ENCODE measurements at regions of chr2 and their contacts with region 1.

Region 1: DNA sequence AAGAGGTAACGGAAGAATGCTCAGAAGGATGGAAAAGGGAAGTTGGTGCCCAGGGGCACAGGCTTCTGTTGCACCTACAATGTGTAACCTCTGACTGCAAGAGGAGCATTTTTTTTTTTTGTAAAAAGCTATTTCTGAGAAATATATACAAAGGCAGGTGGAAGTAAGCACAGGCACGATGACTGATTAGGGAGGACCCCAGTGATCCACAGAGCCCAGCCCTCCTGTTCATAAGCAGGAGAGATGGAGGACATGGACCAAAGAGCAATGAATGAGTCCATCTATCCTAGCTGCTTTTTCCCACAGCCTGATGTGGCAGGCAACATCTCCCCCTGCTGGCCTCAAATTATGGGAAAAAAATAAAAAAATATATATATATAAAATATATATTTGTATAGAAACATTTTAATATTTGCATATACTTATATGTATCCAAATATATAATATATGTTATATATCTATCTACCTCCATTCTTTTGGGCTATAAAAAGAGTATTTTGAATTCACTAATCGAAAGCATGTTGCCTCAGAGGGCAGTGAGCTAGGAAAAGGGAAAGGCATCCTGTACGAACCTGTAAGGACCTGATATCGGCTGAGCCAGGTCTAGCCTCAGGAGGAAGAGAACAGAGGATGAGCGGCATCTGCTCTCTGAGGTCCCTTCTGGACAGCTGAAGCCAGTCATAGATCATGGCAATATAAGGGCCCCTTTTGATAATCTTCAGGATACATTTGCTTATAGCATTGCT is 166.0 kb upstream of the STK17B start:
- DNase-seq: peak; percentile 56
- H3K4me3 ChIP-seq: no peak overlapping the region
- H3K27ac ChIP-seq: no peak overlapping the region
- H3K4me1 ChIP-seq: peaks cover 2% of the 10 kb centered on the region
- H3K27me3 ChIP-seq: no peaks in the 10 kb centered on the region
- CTCF ChIP-seq: peak; percentile 58; the same call in 1 of the 2 replicates

Region 2: DNA sequence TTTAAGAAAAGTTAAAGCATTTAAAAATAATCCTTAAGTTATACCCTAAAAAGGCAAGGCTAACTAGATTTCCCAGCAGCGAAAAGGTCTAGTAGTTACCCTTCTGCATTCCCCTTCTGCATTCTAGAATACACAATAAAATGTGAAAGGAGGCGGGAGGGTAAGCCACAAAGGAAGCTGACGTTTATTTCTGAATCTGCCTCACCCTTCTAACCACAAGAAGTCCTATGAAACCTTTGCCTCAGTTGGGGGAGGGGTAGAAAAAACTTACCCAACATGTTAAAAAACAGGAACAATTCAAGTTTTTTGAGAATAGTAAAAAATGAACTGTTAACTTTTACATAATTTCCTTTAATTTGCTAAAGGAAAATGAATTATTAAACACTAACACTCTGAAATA is 177.3 kb before region 1 on chr2:
- CTCF ChIA-PET with region 1: no interaction called
- POLR2A ChIA-PET with region 1: no interaction called
- intact Hi-C with region 1: loop called (anchors 10 kb)
- DNase-seq: peak; percentile 75
- H3K4me3 ChIP-seq: no peak overlapping the region
- H3K27ac ChIP-seq: no peak overlapping the region
- H3K4me1 ChIP-seq: peaks cover 12% of the 10 kb centered on the region
- H3K27me3 ChIP-seq: no peaks in the 10 kb centered on the region
- CTCF ChIP-seq: no peak

Region 3: GRCh38 chr2:196293751-196294512 is 43.4 kb before region 1 on chr2:
- CTCF ChIA-PET with region 1: interaction called, 7 read pairs
- POLR2A ChIA-PET with region 1: no interaction called
- intact Hi-C with region 1: loop called (anchors 1 kb)
- DNase-seq: no peak
- H3K4me3 ChIP-seq: no peak overlapping the region
- H3K27ac ChIP-seq: no peak overlapping the region
- H3K4me1 ChIP-seq: no peaks in the 10 kb centered on the region
- H3K27me3 ChIP-seq: no peaks in the 10 kb centered on the region
- CTCF ChIP-seq: no peak

Region 4: DNA sequence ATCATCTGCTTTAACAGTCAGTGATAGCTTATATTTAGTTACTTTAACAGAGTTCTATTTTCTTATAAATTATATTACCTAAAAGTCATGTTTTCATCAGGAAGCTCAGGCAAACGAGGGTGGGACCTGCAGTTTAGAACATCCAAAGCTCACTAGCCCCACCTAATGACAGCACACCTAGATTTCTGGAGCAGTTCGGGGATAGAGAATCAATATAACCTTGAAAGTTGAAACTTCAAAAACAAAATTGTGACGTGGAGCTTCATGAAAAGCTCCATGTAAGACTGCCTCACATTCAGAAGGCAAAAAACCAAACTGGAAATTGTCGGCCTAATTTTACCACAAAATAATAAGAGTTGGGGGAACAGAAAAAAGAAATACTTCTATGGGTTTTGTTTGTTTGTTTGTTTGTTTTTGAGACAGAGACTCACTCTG is 116.2 kb after region 1 on chr2:
- CTCF ChIA-PET with region 1: interaction called, 3 read pairs
- POLR2A ChIA-PET with region 1: no interaction called
- intact Hi-C with region 1: loop called (anchors 5 kb)
- DNase-seq: peak; percentile 57
- H3K4me3 ChIP-seq: no peak overlapping the region
- H3K27ac ChIP-seq: no peak overlapping the region
- H3K4me1 ChIP-seq: no peaks in the 10 kb centered on the region
- H3K27me3 ChIP-seq: no peaks in the 10 kb centered on the region
- CTCF ChIP-seq: peak; percentile 71

Measured in A673 (cell line).